Activated naive CD4-positive, alpha-beta T cell treated with anti-CD3 and anti-CD28 coated beads for 36 hours (primary cell): ENCODE measurements at regions of chr22 and their contacts with region 1.

Region 1: DNA sequence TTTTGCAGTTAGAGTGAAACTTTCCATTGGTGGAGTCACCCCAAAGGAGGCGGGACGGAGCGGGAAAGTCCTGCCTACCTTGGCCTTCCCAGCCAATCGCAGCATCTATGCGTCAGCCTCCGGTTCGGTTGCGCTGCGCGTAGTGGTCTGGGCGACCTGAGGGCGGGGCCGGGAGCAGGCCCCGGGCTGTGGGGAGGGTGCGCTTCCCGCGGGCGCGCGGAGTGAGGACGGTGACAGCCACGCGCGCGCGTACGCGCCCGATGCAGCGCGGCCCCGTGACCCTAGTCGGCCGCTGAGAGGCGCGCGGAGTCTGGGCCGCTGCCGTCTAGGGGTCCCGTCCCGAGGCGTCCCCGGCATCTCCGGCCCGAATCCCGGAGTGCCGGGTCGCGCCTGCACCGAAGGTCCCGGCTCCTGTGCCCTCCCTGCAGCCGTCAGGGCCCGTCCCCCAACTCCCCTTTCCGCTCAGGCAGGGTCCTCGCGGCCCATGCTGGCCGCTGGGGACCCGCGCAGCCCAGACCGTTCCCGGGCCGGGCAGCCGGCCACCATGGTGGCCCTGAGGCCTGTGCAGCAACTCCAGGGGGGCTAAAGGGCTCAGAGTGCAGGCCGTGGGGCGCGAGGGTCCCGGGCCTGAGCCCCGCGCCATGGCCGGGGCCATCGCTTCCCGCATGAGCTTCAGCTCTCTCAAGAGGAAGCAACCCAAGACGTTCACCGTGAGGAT is at the start of gene NF2:
- DNase-seq: peak; percentile 99
- H3K4me3 Mint-ChIP-seq: peak within 1 kb of the TSS; percentile 92
- H3K27ac Mint-ChIP-seq: peak within 1 kb of the TSS; percentile 97
- H3K4me1 Mint-ChIP-seq: peaks cover 22% of the 10 kb centered on the region
- H3K27me3 Mint-ChIP-seq: no peaks in the 10 kb centered on the region
- total RNA-seq, gene NF2: 29.8 to 30.0 TPM

Region 2: DNA sequence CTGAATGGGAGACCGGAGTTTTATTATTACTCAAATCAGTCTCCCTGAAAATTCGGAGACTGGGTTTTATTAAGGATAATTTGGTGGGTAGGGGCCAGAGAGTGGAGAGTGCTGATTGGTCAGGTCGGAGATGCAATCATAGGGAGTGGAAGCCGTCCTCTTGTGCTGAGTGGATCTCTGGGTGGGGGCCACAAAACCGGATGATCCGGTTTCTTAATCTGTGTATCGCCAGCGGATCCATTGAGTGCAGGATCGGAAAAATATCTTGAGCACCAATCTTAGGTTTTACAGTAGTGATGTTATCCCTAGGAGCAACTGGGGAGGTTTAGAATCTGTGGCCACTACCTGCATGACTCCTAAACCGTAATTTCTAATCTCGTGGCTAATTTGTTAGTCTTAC is 21.7 kb before region 1 on chr22:
- CTCF ChIA-PET with region 1: interaction called, 4 read pairs
- intact Hi-C with region 1: loop called (anchors 1 kb)
- DNase-seq: no peak
- H3K4me3 Mint-ChIP-seq: peak overlapping the region; percentile 92
- H3K27ac Mint-ChIP-seq: no peak overlapping the region
- H3K4me1 Mint-ChIP-seq: peaks cover 17% of the 10 kb centered on the region
- H3K27me3 Mint-ChIP-seq: no peaks in the 10 kb centered on the region

Region 3: GRCh38 chr22:29617922-29618629 is 14.6 kb after region 1 on chr22:
- CTCF ChIA-PET with region 1: interaction called, 6 read pairs
- intact Hi-C with region 1: loop called (anchors 1 kb)
- DNase-seq: no peak
- H3K4me3 Mint-ChIP-seq: no peak overlapping the region
- H3K27ac Mint-ChIP-seq: peak overlapping the region; percentile 50
- H3K4me1 Mint-ChIP-seq: peaks cover 46% of the 10 kb centered on the region
- H3K27me3 Mint-ChIP-seq: no peaks in the 10 kb centered on the region

Region 4: GRCh38 chr22:29635734-29636357 is 32.3 kb after region 1 on chr22:
- CTCF ChIA-PET with region 1: interaction called, 15 read pairs
- intact Hi-C with region 1: no loop called
- DNase-seq: no peak
- H3K4me3 Mint-ChIP-seq: no peak overlapping the region
- H3K27ac Mint-ChIP-seq: no peak overlapping the region
- H3K4me1 Mint-ChIP-seq: peaks cover 21% of the 10 kb centered on the region
- H3K27me3 Mint-ChIP-seq: no peaks in the 10 kb centered on the region

Region 5: DNA sequence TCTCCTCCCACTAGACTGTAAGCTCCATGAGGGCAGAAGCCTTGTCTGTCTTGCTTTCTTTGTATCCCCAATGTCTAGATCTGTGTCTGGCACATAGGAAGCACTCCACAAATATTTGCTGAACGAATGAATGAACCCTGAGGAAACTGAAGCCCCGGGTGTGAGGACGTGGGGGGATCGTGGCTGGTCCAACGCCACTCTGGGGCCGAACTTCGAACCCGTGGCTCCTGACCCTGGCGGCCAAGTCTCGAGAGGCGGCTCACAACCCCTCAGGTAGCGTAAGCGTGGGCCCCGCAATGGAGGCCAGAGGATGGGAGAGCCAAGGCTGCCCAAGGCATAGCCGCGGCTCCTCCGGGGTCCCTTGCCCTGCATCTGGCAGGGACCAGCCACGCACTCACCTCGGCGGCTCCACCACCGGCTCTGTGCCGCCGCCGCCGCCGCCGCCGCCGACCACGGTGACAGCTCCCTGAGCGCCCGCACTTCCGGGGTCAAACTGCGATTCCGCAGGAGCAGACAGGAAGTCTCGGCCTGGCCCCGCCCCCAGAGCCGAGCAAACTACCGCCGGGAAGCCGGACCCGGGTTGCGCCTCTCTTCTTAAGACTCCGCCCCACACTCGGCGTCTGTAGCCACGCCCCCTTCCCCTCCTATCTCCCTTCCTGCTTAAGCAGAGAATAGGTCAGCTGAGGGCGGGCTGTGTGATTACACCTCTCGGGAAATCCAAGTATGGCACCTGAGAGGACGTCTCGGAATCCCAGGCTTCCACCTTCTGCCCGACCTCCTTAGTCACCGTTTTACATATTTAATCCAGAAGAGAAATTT is 234.5 kb after region 1 on chr22 and contains the start of gene ASCC2:
- CTCF ChIA-PET with region 1: no interaction called
- intact Hi-C with region 1: loop called (anchors 1 kb)
- DNase-seq: peak; percentile 100
- H3K4me3 Mint-ChIP-seq: peak within 1 kb of the TSS; percentile 94
- H3K27ac Mint-ChIP-seq: peak within 1 kb of the TSS; percentile 92
- H3K4me1 Mint-ChIP-seq: peaks cover 34% of the 10 kb centered on the region
- H3K27me3 Mint-ChIP-seq: no peaks in the 10 kb centered on the region
- total RNA-seq, gene ASCC2: 57.6 to 60.4 TPM

Region 6: GRCh38 chr22:30262917-30263741 is 659.6 kb after region 1 on chr22:
- CTCF ChIA-PET with region 1: no interaction called
- intact Hi-C with region 1: loop called (anchors 10 kb)
- DNase-seq: peak; percentile 87
- H3K4me3 Mint-ChIP-seq: peak overlapping the region; percentile 65
- H3K27ac Mint-ChIP-seq: peak overlapping the region; percentile 43
- H3K4me1 Mint-ChIP-seq: peaks cover 39% of the 10 kb centered on the region
- H3K27me3 Mint-ChIP-seq: no peaks in the 10 kb centered on the region